Astrocyte of the cerebellum (primary cell): ENCODE measurements at regions of chr3 and their contacts with region 1.

Region 1: DNA sequence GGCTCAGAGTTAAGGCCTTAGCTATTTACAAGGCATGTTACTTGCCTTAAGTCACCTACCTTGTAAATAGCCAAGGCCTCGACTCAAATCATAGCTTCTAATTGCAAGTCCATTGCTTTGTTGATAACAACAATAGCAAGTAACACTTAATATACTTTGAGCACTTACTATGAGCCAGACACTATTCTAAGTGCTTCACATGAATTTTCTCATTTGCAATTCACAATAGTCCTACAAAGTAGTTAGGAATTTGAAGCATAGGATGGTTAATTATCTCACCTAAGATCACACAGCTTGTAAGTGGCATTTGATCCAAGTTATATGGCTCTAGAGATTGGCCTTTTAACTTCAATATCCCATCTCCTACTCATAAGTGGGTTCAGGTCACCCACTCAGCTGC is 28.4 kb downstream of the SLC9A9 start:
- DNase-seq: no peak
- H3K4me3 ChIP-seq: no peak overlapping the region
- CTCF ChIP-seq: no peak

Region 2: GRCh38 chr3:143865302-143865701 is 45.4 kb after region 1 on chr3:
- in situ Hi-C with region 1: loop called (anchors 5 kb)
- DNase-seq: no peak
- H3K4me3 ChIP-seq: no peak overlapping the region
- CTCF ChIP-seq: no peak

Region 3: GRCh38 chr3:144583871-144584270 is 764.0 kb after region 1 on chr3:
- in situ Hi-C with region 1: no loop called
- DNase-seq: no peak
- H3K4me3 ChIP-seq: no peak overlapping the region
- CTCF ChIP-seq: no peak